ENCODE measurements at regions of chr3 and their contacts with region 1.

Region 1: GRCh38 chr3:30606301-30607031 is at the start of gene TGFBR2:
- DNase-seq: peak; percentile 84
- ATAC-seq: peak; percentile 81
- H3K4me3 Mint-ChIP-seq: peak within 1 kb of the TSS; percentile 97
- H3K27ac Mint-ChIP-seq: peak within 1 kb of the TSS; percentile 99
- H3K4me1 Mint-ChIP-seq: peaks cover 85% of the 10 kb centered on the region
- H3K27me3 Mint-ChIP-seq: no peaks in the 10 kb centered on the region
- CTCF ChIP-seq: no peak
- total RNA-seq, gene TGFBR2: 99.1 and 104 TPM in 2 replicates

Region 2: DNA sequence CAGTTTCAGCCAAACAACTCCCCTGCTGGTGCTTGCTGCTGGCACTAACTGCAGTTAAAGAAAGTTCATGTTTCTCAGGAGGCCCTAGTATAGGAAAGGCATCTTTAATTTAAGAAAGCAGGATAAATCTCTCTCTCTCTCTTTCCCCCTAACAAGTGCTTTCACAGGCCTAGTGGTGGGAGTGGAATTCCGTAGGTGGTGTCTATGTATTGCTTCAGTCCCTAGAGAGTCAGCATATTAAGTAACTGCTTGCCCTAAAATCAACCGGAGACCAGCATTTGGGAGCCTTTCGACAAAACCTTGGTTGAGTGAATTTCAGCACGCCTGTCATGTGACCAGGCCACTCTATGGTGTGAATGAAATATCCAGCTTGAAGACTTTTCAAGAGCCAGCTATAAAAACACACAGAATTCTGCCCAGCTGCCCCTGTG is 169.3 kb before region 1 on chr3:
- CTCF ChIA-PET with region 1: no interaction called
- POLR2A ChIA-PET with region 1: interaction called, 16 read pairs
- intact Hi-C with region 1: loop called (anchors 2 kb)
- DNase-seq: no peak
- ATAC-seq: no peak
- H3K4me3 Mint-ChIP-seq: no peak overlapping the region
- H3K27ac Mint-ChIP-seq: no peak overlapping the region
- H3K4me1 Mint-ChIP-seq: peaks cover 43% of the 10 kb centered on the region
- H3K27me3 Mint-ChIP-seq: no peaks in the 10 kb centered on the region
- CTCF ChIP-seq: no peak

Region 3: DNA sequence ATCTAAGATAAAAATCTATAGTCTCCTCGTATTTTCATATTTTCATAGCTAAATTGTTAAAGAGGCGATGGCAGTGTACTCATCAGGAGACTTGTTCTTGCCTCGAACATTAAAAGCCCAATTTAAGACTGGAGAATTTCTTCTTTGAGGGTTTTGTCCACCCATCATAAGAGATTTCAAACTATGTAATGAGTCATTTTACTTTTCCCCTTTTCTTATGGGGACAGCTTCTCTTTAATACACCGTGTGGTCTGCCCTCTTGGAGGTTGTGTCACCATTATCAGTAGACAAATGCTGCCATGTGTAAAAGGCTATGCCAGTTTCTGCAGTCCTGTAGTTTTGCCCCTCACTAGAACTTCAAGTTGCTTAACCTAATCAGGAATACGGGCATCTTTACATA is 16.9 kb after region 1 on chr3:
- CTCF ChIA-PET with region 1: interaction called, 9 read pairs
- POLR2A ChIA-PET with region 1: interaction called, 79 read pairs
- intact Hi-C with region 1: loop called (anchors 1 kb)
- DNase-seq: no peak
- ATAC-seq: peak; percentile 45
- H3K4me3 Mint-ChIP-seq: peak overlapping the region; percentile 70
- H3K27ac Mint-ChIP-seq: peak overlapping the region; percentile 91
- H3K4me1 Mint-ChIP-seq: peaks cover 94% of the 10 kb centered on the region
- H3K27me3 Mint-ChIP-seq: no peaks in the 10 kb centered on the region
- CTCF ChIP-seq: no peak

Region 4: DNA sequence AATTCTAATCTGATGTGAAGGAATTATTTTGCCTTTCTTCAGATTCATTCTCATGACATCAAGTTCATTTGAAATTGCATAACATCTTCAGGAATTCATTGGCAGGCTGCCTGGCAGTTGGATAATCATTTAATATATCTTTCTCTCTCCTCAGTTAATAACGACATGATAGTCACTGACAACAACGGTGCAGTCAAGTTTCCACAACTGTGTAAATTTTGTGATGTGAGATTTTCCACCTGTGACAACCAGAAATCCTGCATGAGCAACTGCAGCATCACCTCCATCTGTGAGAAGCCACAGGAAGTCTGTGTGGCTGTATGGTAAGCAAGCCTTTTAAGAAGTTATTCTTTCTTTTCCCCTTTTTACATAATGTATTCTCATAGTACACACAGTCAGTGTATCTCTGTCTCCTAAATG is 38.1 kb after region 1 on chr3:
- CTCF ChIA-PET with region 1: interaction called, 7 read pairs
- POLR2A ChIA-PET with region 1: interaction called, 42 read pairs
- intact Hi-C with region 1: loop called (anchors 1 kb)
- DNase-seq: no peak
- ATAC-seq: peak; percentile 38
- H3K4me3 Mint-ChIP-seq: peak overlapping the region; percentile 68
- H3K27ac Mint-ChIP-seq: peak overlapping the region; percentile 91
- H3K4me1 Mint-ChIP-seq: peaks cover 98% of the 10 kb centered on the region
- H3K27me3 Mint-ChIP-seq: no peaks in the 10 kb centered on the region
- CTCF ChIP-seq: no peak

Region 5: GRCh38 chr3:30693470-30694120 is 87.1 kb after region 1 on chr3:
- CTCF ChIA-PET with region 1: interaction called, 15 read pairs
- POLR2A ChIA-PET with region 1: interaction called, 9 read pairs
- intact Hi-C with region 1: loop called (anchors 1 kb)
- DNase-seq: no peak
- ATAC-seq: peak; percentile 91
- H3K4me3 Mint-ChIP-seq: no peak overlapping the region
- H3K27ac Mint-ChIP-seq: peak overlapping the region; percentile 76
- H3K4me1 Mint-ChIP-seq: peaks cover 67% of the 10 kb centered on the region
- H3K27me3 Mint-ChIP-seq: no peaks in the 10 kb centered on the region
- CTCF ChIP-seq: no peak